H1 (cell line): ENCODE measurements at regions of chr13 and their contacts with region 1.

Region 1: DNA sequence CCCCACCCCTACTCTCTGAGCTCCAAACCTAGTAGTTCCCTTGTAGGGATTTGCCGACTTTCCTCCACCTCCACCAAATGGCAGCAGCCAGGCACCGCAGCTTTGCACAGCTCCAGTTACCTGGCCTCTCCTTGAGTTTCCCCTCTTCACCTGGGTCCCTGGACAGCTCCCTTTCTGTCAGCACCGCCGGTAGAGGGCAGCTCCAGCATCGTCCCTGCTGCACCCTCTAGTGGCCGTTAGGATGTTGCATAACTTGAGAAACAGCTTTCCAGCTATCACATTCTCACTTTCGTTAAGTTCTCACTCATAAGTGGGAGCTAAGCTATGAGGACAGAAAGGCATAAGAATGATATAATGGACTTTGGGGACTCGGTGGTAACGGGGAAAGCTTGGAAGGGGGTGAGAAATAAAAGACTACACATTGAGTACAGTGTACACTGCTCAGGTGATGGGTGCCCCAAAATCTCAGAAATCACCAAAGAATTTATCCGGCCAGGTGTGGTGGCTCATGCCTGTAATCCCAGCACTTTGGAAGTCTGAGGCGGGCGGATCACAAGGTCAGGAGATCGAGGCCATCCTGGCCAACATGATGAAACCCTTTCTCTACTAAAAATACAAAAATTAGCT is 60.4 kb upstream of the OLFM4 start:
- DNase-seq: peak; percentile 86 to 90
- H3K4me3 ChIP-seq: no peak overlapping the region
- H3K27ac ChIP-seq: no peak overlapping the region
- H3K4me1 ChIP-seq: peaks cover 0 to 4% (median 3%) of the 10 kb centered on the region in 4 experiments; a peak in 4 of 7 replicates
- H3K27me3 ChIP-seq: no peaks in the 10 kb centered on the region; a peak in 2 of 7 replicates
- CTCF ChIP-seq: peak; percentile 85 to 99 (median 99)
- EP300 ChIP-seq: no peak
- POLR2A ChIP-seq: no peak
- RAD21 ChIP-seq: peak; percentile 97 to 99

Region 2: GRCh38 chr13:52862358-52863206 is 105.6 kb before region 1 on chr13:
- CTCF ChIA-PET with region 1: interaction called, 116 read pairs
- POLR2A ChIA-PET with region 1: no interaction called
- DNase-seq: peak in 1 of 2 experiments; percentile 89
- H3K4me3 ChIP-seq: no peak overlapping the region
- H3K27ac ChIP-seq: no peak overlapping the region
- H3K4me1 ChIP-seq: peaks cover 0 to 4% (median 2%) of the 10 kb centered on the region in 4 experiments; a peak in 2 of 7 replicates
- H3K27me3 ChIP-seq: no peaks in the 10 kb centered on the region
- CTCF ChIP-seq: peak; percentile 22 to 80 (median 78)
- EP300 ChIP-seq: no peak
- POLR2A ChIP-seq: no peak
- RAD21 ChIP-seq: peak; percentile 65 to 75

Region 3: DNA sequence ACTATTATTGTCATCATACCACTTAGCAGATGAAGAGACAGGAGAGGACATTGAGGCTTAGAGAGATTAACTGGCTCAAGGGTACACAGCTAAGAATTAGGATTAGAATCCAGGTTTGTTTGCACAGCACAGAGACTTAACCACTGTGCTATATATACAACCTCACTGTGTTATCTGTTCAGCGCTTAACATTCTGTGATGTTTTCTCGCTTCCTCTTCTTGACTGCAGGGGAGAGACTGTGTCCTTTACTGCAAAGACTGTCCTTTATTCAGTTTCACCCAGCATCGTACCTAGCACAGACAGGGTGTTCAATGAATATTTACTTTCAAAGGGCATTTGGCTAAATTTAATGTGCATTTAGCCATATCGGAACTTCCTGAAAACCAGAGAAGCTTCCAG is 64.9 kb before region 1 on chr13:
- CTCF ChIA-PET with region 1: interaction called, 91 read pairs
- POLR2A ChIA-PET with region 1: no interaction called
- DNase-seq: no peak
- H3K4me3 ChIP-seq: no peak overlapping the region
- H3K27ac ChIP-seq: no peak overlapping the region
- H3K4me1 ChIP-seq: peaks cover 9 to 45% (median 32%) of the 10 kb centered on the region in 4 experiments
- H3K27me3 ChIP-seq: no peaks in the 10 kb centered on the region; a peak in 1 of 7 replicates
- CTCF ChIP-seq: no peak
- EP300 ChIP-seq: no peak
- POLR2A ChIP-seq: no peak
- RAD21 ChIP-seq: no peak

Region 4: GRCh38 chr13:52947921-52948373 is 20.2 kb before region 1 on chr13:
- CTCF ChIA-PET with region 1: interaction called, 63 read pairs
- POLR2A ChIA-PET with region 1: interaction called, 3 read pairs
- DNase-seq: no peak
- H3K4me3 ChIP-seq: no peak overlapping the region
- H3K27ac ChIP-seq: no peak overlapping the region
- H3K4me1 ChIP-seq: peaks cover 5 to 16% (median 10%) of the 10 kb centered on the region in 4 experiments
- H3K27me3 ChIP-seq: peaks cover 0 to 2% (median 0%) of the 10 kb centered on the region in 4 experiments; a peak in 1 of 7 replicates
- CTCF ChIP-seq: no peak
- EP300 ChIP-seq: no peak
- POLR2A ChIP-seq: no peak
- RAD21 ChIP-seq: no peak

Region 5: GRCh38 chr13:53068585-53069520 is 100.7 kb after region 1 on chr13:
- CTCF ChIA-PET with region 1: interaction called, 12 read pairs
- POLR2A ChIA-PET with region 1: no interaction called
- DNase-seq: no peak
- H3K4me3 ChIP-seq: no peak overlapping the region
- H3K27ac ChIP-seq: no peak overlapping the region
- H3K4me1 ChIP-seq: no peaks in the 10 kb centered on the region
- H3K27me3 ChIP-seq: no peaks in the 10 kb centered on the region
- CTCF ChIP-seq: no peak
- EP300 ChIP-seq: no peak
- POLR2A ChIP-seq: no peak
- RAD21 ChIP-seq: peak in 1 of 2 experiments; percentile 18; a peak in 3 of 4 replicates

Region 6: GRCh38 chr13:53098455-53099159 is 130.4 kb after region 1 on chr13:
- CTCF ChIA-PET with region 1: no interaction called
- POLR2A ChIA-PET with region 1: no interaction called
- DNase-seq: no peak
- H3K4me3 ChIP-seq: no peak overlapping the region
- H3K27ac ChIP-seq: no peak overlapping the region
- H3K4me1 ChIP-seq: no peaks in the 10 kb centered on the region
- H3K27me3 ChIP-seq: no peaks in the 10 kb centered on the region
- CTCF ChIP-seq: no peak
- EP300 ChIP-seq: no peak
- POLR2A ChIP-seq: no peak
- RAD21 ChIP-seq: no peak

Region 7: DNA sequence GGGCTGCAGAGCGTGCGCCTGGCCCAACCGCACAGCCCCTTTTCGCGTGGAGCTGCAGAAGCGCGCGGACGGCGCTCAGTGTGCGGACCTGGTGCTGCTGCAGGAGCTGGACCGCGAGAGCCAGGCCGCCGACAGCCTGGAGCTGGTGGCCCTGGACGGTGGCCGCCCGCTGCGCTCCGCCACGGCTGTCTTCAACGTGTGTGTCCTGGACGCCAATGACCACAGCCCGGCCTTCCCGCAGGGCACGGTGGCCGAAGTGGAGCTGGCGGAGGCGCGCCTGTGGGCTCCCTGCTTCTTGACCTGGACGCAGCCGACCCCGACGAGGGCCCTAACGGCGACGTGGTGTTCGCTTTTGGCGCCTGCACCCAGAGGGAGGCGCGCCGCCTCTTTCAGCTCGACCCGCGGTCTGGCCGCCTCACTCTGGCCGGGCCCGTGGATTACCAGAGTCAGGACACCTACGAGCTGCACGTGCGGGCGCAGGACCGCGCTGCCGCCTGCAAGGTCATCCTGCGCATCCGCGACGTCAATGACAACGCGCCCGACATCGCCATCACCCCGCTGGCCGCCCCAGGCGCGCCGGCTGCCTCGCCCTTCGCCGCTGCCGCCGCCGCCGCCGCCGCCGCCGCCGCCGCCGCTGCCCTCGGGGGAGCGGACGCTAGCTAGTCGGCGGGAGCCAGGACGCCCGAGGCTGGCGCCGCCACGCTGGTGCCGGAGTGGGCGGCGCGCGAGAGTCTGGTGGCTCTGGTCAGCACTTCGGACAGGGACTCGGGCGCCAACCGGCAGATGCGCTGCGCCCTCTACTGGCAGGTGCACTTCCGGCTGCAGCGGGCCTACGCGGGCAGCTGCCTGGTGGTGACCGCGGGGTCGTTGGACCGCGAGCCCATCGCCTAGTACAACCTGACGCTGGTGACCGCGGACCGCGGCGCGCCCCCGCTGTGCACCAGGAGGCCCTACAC is 232.6 kb after region 1 on chr13:
- CTCF ChIA-PET with region 1: interaction called, 21 read pairs
- POLR2A ChIA-PET with region 1: no interaction called
- DNase-seq: peak; percentile 62 to 92
- H3K4me3 ChIP-seq: peak overlapping the region; percentile 34 to 59 (median 40)
- H3K27ac ChIP-seq: no peak overlapping the region
- H3K4me1 ChIP-seq: peaks cover 0 to 7% (median 4%) of the 10 kb centered on the region in 4 experiments; a peak in 4 of 7 replicates
- H3K27me3 ChIP-seq: peaks cover 20 to 33% (median 32%) of the 10 kb centered on the region in 4 experiments
- CTCF ChIP-seq: peak; percentile 92 to 99 (median 93)
- EP300 ChIP-seq: peak in 1 of 2 experiments; percentile 58; a peak in 1 of 3 replicates
- POLR2A ChIP-seq: no peak
- RAD21 ChIP-seq: peak; percentile 68 to 76

Region 8: DNA sequence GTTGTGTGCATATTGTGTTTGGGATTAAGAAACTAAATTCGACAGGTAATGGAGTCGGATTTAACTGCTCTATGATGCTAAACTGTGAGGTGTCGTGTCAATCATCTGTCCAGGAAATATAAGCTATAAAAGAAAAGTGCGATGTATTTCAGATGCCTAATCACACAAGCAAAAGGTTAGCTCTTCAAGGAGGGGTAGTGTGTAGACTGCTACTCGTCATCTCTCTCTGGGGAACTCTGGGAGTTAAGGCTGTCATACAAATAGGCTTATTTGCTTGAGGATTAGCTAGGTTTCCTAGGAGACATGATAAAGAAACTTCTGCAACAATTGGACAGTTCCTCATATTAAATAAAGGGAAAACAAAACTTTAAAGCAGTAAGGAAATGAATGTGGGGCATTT is 522.6 kb after region 1 on chr13:
- CTCF ChIA-PET with region 1: no interaction called
- POLR2A ChIA-PET with region 1: no interaction called
- DNase-seq: no peak
- H3K4me3 ChIP-seq: no peak overlapping the region
- H3K27ac ChIP-seq: no peak overlapping the region
- H3K4me1 ChIP-seq: no peaks in the 10 kb centered on the region
- H3K27me3 ChIP-seq: no peaks in the 10 kb centered on the region
- CTCF ChIP-seq: no peak
- EP300 ChIP-seq: no peak
- POLR2A ChIP-seq: no peak
- RAD21 ChIP-seq: no peak